Activated CD4-positive, alpha-beta memory T cell treated with anti-CD3 and anti-CD28 coated beads for 36 hours (primary cell): ENCODE measurements at regions of chr3 and their contacts with region 1.

Region 1: DNA sequence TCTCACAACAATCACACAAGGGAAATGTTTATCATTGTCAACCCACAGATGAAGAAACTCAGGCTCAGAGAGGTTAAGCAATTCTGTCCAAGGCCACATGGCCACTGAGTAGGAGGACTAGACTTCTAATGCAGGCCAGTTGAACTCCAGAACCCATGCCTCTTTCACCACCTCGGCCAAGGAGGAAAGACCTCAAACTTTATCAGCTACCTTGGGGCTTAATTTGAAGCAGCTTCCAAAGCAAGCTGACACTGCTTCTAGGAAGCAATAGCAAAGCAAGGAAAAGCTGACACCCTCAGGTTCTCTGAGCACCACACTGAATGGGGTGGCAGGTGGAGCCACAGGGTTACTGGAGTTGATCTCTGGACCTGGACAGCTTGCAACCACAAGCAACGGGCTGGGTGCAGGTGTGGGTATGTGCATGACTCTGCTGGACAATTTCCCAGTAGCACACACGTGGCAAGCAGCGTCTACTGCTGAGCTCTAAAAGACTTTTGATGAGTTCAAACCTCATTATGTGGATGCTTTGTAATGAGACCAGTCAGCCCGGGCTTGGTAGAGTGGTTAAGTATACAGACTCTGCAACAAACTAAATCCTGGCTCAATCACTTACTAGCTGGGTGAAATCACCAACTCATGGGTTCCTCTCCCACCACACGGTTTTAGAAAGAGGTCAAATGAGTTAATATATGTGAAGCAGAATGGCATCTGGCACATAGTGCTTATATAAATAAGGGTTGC is 23.1 kb downstream of the CCNL1 start:
- DNase-seq: no peak
- H3K4me3 Mint-ChIP-seq: no peak overlapping the region
- H3K27ac Mint-ChIP-seq: no peak overlapping the region
- H3K4me1 Mint-ChIP-seq: peaks cover 40% of the 10 kb centered on the region
- H3K27me3 Mint-ChIP-seq: no peaks in the 10 kb centered on the region

Region 2: GRCh38 chr3:156151824-156152428 is 984.9 kb before region 1 on chr3:
- CTCF ChIA-PET with region 1: interaction called, 12 read pairs
- POLR2A ChIA-PET with region 1: no interaction called
- intact Hi-C with region 1: loop called (anchors 2 kb)
- DNase-seq: peak; percentile 73
- H3K4me3 Mint-ChIP-seq: no peak overlapping the region
- H3K27ac Mint-ChIP-seq: no peak overlapping the region
- H3K4me1 Mint-ChIP-seq: peaks cover 3% of the 10 kb centered on the region
- H3K27me3 Mint-ChIP-seq: no peaks in the 10 kb centered on the region

Region 3: DNA sequence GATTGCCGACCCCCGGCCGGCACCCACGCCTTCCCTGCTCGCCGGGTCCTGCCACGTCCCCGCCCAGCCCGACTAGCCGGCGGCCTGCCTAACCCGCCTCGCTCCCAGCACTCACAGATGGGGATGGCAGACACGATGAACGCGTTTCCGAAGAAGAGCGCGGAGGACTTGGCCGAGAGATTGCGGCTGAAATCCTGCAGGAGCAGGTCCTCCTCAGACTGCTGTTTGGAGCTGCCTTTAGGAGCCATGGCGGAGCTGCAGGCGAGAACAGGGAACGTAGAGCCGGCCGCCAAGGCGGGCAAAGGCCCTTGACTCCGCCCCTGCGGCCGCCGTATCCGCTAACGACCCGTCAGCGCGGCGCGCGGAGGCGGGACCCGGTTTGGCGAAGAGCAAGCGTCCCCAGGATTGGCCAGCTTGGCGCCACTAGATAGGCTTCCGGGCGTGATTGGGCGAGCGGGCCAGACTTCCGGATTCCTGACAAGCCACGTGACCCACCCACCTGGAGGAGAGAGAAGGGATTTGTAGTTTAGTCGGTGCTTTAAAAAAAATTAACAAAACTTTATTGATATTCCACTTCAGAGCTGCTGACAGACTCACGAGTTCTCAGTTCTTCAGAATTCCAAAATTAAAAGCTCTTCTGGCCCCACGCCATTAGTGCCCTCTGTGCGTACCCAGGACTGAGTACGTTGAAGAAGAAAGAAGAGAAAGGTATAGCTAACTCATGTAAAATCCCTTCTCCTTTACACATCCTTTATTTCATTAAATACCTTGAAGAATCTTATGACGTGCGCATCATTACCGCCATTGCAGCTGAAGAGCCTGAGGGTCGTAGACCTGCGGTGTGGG is 581.8 kb before region 1 on chr3 and contains the start of gene SSR3:
- CTCF ChIA-PET with region 1: interaction called, 24 read pairs
- POLR2A ChIA-PET with region 1: interaction called, 6 read pairs
- intact Hi-C with region 1: no loop called
- DNase-seq: peak; percentile 99
- H3K4me3 Mint-ChIP-seq: peak within 1 kb of the TSS; percentile 97
- H3K27ac Mint-ChIP-seq: peak within 1 kb of the TSS; percentile 88
- H3K4me1 Mint-ChIP-seq: peaks cover 46% of the 10 kb centered on the region
- H3K27me3 Mint-ChIP-seq: no peaks in the 10 kb centered on the region
- total RNA-seq, gene SSR3: 162 to 170 TPM

Region 4: GRCh38 chr3:157088601-157089454 is 48.0 kb before region 1 on chr3:
- CTCF ChIA-PET with region 1: interaction called, 53 read pairs
- POLR2A ChIA-PET with region 1: interaction called, 67 read pairs
- intact Hi-C with region 1: no loop called
- DNase-seq: peak; percentile 96
- H3K4me3 Mint-ChIP-seq: peak overlapping the region; percentile 72
- H3K27ac Mint-ChIP-seq: peak overlapping the region; percentile 96
- H3K4me1 Mint-ChIP-seq: peaks cover 64% of the 10 kb centered on the region
- H3K27me3 Mint-ChIP-seq: no peaks in the 10 kb centered on the region

Region 5: DNA sequence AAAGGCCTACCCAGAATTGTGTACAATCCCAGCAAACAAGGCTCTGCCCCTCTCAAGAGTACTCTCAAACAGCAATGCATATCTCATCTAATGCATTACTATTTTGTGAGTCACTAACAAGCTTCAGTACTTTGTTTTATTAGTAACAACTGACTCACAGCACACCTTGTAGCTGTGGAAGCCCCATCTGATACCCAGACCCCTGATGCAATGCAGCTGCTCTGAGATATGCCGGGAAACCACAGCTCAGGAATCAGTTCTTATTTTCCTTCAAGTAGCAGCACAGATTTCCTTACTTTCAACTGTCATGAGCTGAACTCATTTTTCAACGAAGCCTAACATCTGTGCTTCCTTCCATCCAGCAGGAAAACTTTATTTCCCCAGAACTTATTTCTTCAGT is 14.7 kb before region 1 on chr3:
- CTCF ChIA-PET with region 1: interaction called, 19 read pairs
- POLR2A ChIA-PET with region 1: interaction called, 3 read pairs
- intact Hi-C with region 1: no loop called
- DNase-seq: no peak
- H3K4me3 Mint-ChIP-seq: no peak overlapping the region
- H3K27ac Mint-ChIP-seq: no peak overlapping the region
- H3K4me1 Mint-ChIP-seq: peaks cover 23% of the 10 kb centered on the region
- H3K27me3 Mint-ChIP-seq: no peaks in the 10 kb centered on the region